Psoas muscle (tissue), 8 donors: ENCODE measurements at regions of chr18 and their contacts with region 1.

Region 1: DNA sequence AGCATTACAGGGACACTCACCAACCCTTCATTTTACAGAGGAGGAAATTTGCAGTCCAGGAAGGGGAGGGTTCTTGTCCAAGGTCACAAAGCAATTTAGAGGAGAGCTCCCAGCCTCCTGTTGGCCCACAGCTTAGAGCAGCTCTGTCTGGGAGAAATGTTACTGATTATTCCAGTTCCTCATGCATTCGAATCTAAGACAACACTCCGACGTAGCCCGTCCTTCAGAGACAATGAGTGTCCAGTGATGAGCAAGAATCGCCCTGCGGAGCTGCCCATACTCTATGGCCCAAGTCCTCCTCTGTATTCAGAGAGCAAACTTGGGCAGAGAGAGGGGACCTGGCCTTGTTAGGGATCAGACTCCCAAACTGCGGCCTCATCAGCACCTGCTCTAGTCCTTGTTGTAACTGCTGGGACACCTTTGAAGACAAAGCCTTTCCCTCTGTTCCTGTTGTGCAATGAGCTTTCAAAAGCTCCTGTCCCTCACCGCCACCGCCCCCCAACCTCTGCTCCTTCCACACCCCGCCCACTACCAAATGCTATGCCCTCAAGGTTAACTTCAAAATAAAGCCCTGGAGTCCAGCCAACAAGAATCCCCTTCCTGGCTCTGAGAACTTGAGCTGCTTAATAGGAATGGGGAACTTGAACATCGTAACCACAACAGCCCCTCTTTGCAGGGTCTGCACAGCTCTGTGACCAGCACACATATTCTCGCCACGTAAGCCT is 234.8 kb upstream of the SMAD2 start:
- DNase-seq: no peak
- ATAC-seq: no peak
- H3K4me3 ChIP-seq: no peak overlapping the region
- H3K27ac ChIP-seq: no peak overlapping the region
- H3K4me1 ChIP-seq: peaks cover 3% of the 10 kb centered on the region
- H3K27me3 ChIP-seq: no peaks in the 10 kb centered on the region
- CTCF ChIP-seq: no peak

Region 2: DNA sequence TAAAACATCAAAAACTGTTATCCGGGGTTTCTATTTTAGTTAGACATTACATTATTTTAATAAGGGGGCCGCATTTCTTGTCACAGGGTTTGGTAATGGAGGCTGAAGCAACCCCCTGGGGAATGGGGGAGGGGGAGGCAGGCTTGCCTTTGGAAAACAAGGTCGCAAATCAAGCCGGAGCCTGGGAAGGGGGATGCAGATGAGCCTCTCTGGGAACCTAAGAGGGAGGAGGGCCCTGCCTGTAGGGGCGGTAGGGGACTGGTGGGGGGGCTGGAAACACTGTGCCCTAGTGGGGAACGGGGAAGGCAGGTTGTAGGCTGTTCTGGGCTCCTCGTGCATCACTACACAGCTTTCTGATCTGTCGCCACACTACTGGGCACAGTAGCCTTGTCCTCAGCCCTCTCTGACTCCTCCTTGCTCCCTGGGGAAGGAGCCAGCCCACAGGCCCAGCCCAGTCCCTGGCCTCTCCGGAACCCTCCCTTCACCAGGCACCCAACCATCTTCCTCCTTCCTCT is 64.6 kb before region 1 on chr18:
- intact Hi-C with region 1: no loop called
- DNase-seq: no peak
- ATAC-seq: no peak
- H3K4me3 ChIP-seq: no peak overlapping the region
- H3K27ac ChIP-seq: no peak overlapping the region
- H3K4me1 ChIP-seq: no peaks in the 10 kb centered on the region
- H3K27me3 ChIP-seq: peaks cover 0 to 3% (median 0%) of the 10 kb centered on the region in 3 donors
- CTCF ChIP-seq: no peak

Region 3: DNA sequence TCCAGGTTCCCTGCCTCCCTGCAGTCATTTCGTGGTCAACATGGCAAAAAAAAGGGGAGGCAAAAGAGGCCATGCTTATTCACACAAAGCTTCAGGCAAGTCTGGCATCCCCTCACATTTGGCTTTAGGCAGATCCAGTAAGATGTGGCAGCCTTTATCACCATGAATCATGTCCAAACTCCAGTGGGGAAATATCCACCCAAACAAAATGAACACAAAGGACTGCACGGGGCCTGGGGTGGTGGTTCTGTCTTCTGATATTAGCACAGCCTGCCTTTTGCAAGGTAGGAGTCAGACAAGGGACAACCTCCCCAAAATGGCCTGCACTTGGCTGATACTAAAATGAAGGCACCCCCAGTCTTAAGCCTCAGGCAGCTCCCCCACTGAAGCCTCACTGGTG is 114.0 kb after region 1 on chr18:
- intact Hi-C with region 1: no loop called
- DNase-seq: no peak
- ATAC-seq: no peak
- H3K4me3 ChIP-seq: no peak overlapping the region
- H3K27ac ChIP-seq: no peak overlapping the region
- H3K4me1 ChIP-seq: peaks cover 1% of the 10 kb centered on the region
- H3K27me3 ChIP-seq: no peaks in the 10 kb centered on the region
- CTCF ChIP-seq: no peak

Region 4: GRCh38 chr18:48374423-48375149 is 209.3 kb after region 1 on chr18:
- intact Hi-C with region 1: loop called in 1 of 2 experiments (anchors 5 kb)
- DNase-seq: no peak
- ATAC-seq: no peak
- H3K4me3 ChIP-seq: no peak overlapping the region
- H3K27ac ChIP-seq: no peak overlapping the region
- H3K4me1 ChIP-seq: no peaks in the 10 kb centered on the region
- H3K27me3 ChIP-seq: peaks cover 0 to under 1% (median 0%) of the 10 kb centered on the region in 3 donors
- CTCF ChIP-seq: no peak